K562 (cell line): ENCODE measurements at regions of chr22 and their contacts with region 1.

Region 1: DNA sequence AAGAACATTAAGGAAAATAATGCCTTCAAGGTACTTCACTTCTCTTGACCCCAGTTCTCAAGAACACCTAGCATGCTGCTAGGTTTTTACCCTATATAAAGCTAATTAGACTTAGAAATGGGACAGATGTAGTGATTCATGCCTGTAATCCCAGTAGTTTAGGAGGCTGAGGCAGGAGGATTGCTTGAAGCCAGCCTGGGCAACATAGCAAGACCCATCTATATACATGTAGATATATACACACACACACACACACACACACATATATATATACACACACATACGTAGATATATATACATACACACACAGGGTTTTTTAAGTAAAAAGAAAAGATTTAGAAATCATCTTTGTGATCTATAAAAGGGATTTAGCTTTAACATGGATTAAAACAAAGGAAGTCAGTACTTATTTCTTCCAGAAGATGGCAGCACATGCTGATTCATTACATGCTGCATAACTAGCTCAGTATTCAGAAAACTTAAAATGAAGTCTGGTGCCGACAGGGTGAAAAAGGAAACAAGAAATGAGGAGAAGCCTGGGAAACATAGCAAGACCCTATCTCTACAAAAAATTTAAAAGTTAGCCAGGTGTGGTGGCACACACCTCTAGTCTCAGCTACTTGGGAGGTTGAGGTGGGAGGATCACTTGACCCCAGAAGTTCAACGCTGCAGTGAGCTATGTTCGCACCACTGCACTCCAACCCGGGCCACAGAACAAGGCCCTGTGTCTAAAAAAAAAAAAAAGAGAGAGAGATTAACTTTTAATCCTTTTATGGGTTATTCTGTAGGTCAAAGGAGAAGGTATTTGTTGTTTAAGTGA is 28.5 kb upstream of the RBX1 start:
- DNase-seq: peak; percentile 17 to 63 (median 26)
- ATAC-seq: peak; percentile 73
- H3K4me3 ChIP-seq: no peak overlapping the region
- H3K27ac ChIP-seq: no peak overlapping the region
- H3K4me1 ChIP-seq: no peaks in the 10 kb centered on the region
- H3K27me3 ChIP-seq: no peaks in the 10 kb centered on the region
- CTCF ChIP-seq: peak; percentile 32 to 64 (median 49); a peak in 5 of 6 replicates
- EP300 ChIP-seq: no peak
- POLR2A ChIP-seq: no peak
- RAD21 ChIP-seq: peak; percentile 57 to 79

Region 2: DNA sequence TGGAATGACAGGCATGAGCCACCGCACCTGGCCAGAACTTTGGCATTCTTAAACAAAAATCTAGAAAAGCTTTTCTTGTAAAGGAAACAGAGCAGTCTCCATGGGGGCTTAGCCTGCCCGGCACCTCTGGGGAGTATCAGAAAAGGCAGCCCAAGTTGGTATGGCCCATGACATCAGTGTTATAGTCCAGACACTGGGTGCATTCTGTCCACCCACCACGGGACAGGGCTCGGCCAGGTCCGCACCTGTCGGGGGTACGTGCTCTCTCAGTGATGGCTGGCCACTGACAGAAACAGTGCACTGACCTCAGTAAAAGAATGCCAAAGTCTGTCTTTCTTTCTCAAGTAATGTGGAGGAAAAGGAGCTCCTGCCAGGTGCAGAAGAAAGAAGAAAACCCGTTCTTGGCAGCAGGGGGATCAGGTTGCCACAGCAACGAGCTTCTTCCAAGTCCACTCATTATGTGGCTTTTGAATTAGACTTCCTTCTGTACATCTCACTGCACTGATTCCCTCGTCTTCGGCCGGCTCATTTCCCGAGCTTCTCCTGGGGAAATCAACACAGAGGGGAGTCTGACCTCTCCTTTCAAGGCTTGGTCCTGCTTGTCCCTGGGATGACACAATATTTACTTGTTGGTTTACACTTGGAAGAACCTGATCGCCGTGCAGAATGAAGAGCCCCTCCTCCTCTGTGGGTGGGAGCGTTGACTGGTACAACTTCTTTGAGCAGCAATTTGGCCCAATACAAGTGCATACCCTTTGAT is 208.3 kb before region 1 on chr22:
- CTCF ChIA-PET with region 1: no interaction called
- POLR2A ChIA-PET with region 1: no interaction called
- in situ Hi-C with region 1: no loop called
- intact Hi-C with region 1: no loop called
- DNase-seq: no peak
- ATAC-seq: no peak
- H3K4me3 ChIP-seq: no peak overlapping the region
- H3K27ac ChIP-seq: no peak overlapping the region
- H3K4me1 ChIP-seq: peaks cover 12 to 14% of the 10 kb centered on the region in 2 experiments; a peak in 4 of 5 replicates
- H3K27me3 ChIP-seq: peaks cover 4 to 17% of the 10 kb centered on the region in 2 experiments; a peak in 4 of 5 replicates
- CTCF ChIP-seq: no peak
- EP300 ChIP-seq: no peak
- POLR2A ChIP-seq: no peak
- RAD21 ChIP-seq: no peak

Region 3: DNA sequence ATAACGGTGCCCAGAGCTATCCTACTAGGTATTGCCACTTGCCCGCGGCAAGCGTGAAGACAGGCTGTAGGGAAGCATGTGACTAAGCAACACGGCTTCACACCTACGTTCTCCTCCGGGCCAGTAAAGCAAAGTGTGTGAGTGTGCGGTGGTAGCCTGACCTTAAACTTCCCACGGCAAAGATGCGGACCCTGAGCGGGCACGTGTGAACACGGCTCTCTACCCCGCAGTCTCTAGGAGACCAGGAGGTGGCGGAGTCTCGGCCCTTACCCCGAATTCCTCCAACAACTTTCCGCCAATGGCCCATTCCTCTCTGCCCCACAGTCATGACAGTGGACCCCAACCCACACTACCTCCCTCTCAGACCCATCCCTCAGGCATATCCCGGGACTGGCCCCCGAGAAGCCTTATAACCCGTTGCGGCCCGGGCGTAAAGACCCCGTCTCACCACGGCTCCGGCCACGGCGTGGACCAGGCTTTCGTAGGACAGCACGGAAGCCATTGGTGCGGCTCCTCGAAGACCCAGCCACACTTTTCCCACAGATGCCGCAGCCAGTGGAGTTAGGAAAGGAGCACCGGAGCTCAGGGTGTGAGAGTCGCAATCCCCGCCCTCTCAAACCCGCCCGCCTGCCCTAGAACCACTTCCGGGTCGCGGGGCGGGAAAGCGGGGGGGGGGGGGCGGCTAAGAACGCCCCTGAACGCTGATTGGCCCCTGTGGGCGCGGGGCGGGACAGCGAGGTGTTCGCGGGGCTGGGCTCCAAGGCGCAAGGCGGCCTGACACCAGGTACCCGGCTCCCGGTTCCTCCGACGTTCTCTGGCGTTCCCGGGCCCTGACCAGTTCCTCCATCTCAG is 103.7 kb before region 1 on chr22 and contains the start of gene SLC25A17:
- CTCF ChIA-PET with region 1: no interaction called
- POLR2A ChIA-PET with region 1: no interaction called
- in situ Hi-C with region 1: no loop called
- intact Hi-C with region 1: no loop called
- DNase-seq: peak; percentile 89 to 95 (median 93)
- ATAC-seq: peak; percentile 87
- H3K4me3 ChIP-seq: peak within 1 kb of the TSS; percentile 96
- H3K27ac ChIP-seq: peak within 1 kb of the TSS; percentile 89
- H3K4me1 ChIP-seq: peaks cover 13 to 17% of the 10 kb centered on the region in 2 experiments; a peak in 4 of 5 replicates
- H3K27me3 ChIP-seq: no peaks in the 10 kb centered on the region
- CTCF ChIP-seq: peak in 1 of 3 experiments; percentile 39; a peak in 2 of 6 replicates
- EP300 ChIP-seq: no peak
- POLR2A ChIP-seq: peak; percentile 79
- RAD21 ChIP-seq: no peak
- polyA plus RNA-seq, gene SLC25A17: 104 to 136 TPM

Region 4: DNA sequence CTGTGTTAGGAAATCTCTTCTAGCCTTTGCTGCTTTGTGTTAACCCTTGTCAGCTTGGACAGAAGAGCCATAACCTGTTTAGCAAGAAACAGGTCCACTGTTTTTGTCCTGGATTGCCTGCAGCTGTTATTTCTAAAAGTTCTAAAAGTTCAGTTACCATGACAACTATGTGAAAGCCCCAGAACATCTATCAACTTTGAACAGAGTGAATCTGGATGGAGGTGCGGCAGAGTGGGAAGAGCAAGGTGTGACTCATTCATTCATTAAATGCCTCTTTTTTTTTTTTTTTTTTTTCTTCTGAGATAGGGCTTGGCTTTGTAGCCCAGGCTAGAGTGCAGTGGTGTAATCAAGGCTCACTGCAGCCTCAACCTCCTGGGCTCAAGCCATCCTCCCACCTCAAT is 79.0 kb after region 1 on chr22:
- CTCF ChIA-PET with region 1: no interaction called
- POLR2A ChIA-PET with region 1: no interaction called
- in situ Hi-C with region 1: no loop called
- intact Hi-C with region 1: no loop called
- DNase-seq: peak in 1 of 4 experiments; percentile 22
- ATAC-seq: no peak
- H3K4me3 ChIP-seq: no peak overlapping the region
- H3K27ac ChIP-seq: no peak overlapping the region
- H3K4me1 ChIP-seq: no peaks in the 10 kb centered on the region
- H3K27me3 ChIP-seq: no peaks in the 10 kb centered on the region
- CTCF ChIP-seq: no peak
- EP300 ChIP-seq: no peak
- POLR2A ChIP-seq: no peak
- RAD21 ChIP-seq: no peak

Region 5: GRCh38 chr22:41301105-41302020 is 378.7 kb after region 1 on chr22 and contains the start of gene ZC3H7B:
- CTCF ChIA-PET with region 1: no interaction called
- POLR2A ChIA-PET with region 1: no interaction called
- in situ Hi-C with region 1: no loop called
- intact Hi-C with region 1: loop called (anchors 10 kb)
- DNase-seq: peak; percentile 76 to 87 (median 81)
- ATAC-seq: peak; percentile 94
- H3K4me3 ChIP-seq: peak within 1 kb of the TSS; percentile 90
- H3K27ac ChIP-seq: peak within 1 kb of the TSS; percentile 92
- H3K4me1 ChIP-seq: peaks cover 2 to 10% of the 10 kb centered on the region in 2 experiments; a peak in 3 of 5 replicates
- H3K27me3 ChIP-seq: no peaks in the 10 kb centered on the region
- CTCF ChIP-seq: peak; percentile 44 to 70 (median 55)
- EP300 ChIP-seq: no peak
- POLR2A ChIP-seq: peak; percentile 77
- RAD21 ChIP-seq: peak in 1 of 2 experiments; percentile 34; a peak in 2 of 4 replicates
- polyA plus RNA-seq, gene ZC3H7B: 0.07 to 0.30 TPM